ENCODE measurements at regions of chr12 and their contacts with region 1.

Region 1: DNA sequence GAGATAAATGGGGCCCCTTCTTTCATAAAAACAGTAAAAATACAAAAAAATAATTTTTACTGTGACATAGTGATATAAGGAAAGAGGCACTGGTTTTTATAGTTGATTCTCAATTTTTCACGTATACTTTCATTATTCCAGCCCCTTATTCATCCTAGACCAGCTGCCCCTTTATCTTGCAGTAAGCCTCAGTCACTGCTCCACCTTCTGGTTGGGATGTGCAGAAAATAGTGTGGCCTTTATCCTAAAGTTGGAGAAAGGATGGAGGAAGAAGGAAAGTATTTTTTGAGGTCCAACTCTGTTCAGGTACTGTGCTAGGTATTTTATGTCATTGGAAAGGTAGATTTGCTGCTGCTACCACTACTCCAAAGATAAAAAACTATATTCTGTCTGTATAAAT is 172.7 kb downstream of the ANO6 start:
- DNase-seq: peak; percentile 43

Region 2: DNA sequence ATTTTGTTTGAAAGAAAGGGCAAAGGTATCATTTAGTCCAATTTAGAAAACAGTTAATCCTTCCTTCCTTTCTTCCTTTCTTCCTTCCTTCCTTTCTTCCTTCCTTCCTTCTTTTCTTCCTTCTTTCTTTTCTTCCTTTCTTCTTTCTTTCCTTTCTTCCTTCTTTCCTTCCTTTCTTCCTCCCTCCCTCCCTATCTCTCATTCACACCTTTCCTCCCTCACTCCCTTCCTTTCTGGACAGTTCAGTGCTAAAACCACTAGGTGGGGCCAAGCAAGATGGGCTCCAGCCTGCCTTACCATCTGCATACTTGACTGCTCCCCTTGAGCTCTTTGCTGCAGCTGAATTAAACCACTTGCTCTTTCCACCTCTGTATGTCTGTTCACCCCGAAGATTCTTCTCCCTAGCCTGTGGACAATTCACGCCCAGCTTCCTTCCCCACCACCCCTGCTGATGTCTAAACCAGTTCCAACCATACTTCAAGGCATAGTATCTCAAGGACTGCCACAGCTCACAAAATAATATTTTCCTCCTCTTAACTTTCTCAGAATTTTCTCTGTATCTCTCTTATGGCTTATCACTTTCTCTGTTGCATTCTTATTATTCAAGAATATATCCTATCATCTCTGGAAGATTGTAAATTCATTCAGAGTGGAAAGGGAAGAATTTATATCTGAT is 415.7 kb before region 1 on chr12:
- in situ Hi-C with region 1: no loop called
- DNase-seq: peak; percentile 14

Region 3: DNA sequence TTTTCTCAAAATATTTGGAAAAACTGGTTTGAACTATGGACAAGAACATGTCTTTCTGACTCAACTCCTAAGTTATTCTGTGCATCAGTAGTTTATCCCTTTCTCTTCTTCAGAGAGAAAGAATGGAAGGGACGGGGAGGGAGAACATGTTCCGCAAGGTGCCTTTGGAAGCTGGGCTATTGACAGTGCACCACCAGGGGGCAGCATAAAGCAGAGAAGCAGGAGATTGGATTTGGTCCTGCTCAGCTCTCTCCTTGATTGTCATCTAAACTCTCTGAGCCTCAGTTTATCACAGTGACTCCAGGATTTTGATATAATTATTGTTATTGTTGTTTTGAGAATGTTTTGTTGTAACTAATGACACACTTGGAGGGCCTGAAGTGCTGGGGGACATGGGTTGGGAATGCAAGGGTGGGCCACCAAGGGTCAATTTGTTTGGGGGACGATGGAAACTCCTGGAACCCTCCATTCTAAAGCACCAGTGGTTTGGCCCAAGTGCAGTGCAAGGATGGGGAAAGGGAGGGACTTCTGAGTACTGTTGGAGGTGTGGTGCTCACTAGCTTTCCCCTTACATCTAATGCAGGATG is 218.0 kb before region 1 on chr12:
- in situ Hi-C with region 1: loop called (anchors 25 kb)
- DNase-seq: peak; percentile 76

Region 4: DNA sequence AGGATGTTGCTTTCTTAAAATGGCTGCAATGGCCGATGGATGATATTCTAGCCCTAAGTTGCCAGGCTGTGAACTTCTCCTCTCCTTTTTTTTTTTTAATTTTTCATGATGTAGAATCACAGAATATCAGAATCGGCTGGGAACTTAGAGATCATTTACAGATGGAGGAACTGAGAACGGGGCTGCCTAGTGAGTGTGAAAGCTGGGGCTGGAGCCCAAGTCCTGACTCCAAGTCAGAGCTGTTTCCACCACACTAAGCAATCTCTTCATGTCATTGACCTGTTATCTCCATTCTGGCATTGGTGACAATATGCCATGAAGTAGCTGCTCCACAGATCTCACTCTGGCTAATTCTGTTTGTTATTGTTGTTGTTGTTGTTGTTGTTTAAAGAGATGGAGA is 758.6 kb after region 1 on chr12:
- in situ Hi-C with region 1: no loop called
- DNase-seq: no peak